ENCODE measurements at regions of chr19 and their contacts with region 1.

Region 1: GRCh38 chr19:20776083-20777076 is at the start of gene ZNF66:
- DNase-seq: peak; percentile 96
- ATAC-seq: peak; percentile 100
- total RNA-seq, gene ZNF66: 1.5 TPM

Region 2: DNA sequence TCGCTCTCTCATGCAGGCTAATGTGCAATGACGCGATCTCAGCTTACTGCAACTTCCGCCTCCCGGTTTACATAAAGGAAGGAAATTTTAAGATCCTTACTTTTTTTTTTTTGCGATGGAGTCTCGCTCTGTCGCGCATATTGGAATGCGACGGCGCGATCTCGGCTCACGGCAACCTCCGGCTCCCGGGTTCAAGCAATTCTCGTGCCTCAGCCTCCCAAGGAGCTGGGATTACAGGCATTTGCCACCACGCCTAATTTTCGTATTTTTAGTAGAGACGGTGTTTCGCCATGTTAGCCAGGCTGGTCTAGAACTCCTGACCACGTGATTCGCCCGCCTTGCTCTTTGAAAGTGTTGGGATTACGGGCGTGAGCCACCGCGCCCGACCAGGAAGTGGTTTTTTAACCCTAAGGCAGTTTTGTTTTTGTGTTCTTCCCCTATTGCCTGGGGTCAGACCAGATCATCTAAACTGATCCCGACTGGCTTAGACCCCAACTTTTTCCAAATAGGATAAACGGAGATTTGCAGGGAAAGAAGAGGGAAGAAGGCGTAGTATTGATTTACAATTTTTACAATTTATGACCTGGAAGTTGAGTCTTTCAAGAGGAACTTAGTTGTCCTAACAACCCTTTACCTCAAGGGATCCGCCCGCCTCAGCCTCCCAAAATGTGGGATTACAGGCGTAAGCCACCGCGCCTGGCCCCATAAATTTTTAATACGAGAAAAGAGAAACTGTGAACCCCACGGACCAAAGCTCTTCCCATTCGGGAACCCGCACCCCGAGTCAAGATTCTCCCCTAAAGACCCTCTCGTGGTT is 352.8 kb before region 1 on chr19:
- intact Hi-C with region 1: loop called (anchors 10 kb)
- DNase-seq: peak; percentile 70
- ATAC-seq: peak; percentile 74